ENCODE measurements at regions of chr12 and their contacts with region 1.

Region 1: DNA sequence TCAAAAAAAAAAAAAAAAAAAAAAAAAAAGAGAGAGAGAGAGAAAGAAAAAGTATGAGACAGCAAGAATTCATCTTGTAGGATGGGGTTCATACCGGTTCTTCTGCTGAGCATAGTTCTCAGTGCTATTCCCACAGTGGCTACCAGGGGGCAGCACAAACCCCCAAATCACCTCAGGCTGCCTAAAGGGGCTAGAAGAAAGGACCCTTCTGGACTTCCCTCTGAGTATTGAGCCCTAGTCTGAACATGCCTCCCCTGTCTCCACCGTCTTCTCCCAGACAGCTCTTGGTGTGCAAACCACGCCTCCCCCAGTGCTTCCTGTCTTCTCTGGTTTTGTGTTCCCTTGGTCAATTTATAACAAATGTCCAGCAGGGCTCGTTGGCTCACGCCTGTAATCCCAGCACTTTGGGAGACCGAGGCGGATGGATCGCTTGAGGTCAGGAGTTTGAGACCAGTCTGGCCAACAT is 31.3 kb upstream of the SMUG1 start:
- DNase-seq: peak; percentile 81
- H3K4me3 ChIP-seq: no peak overlapping the region
- H3K27ac ChIP-seq: no peak overlapping the region
- H3K4me1 ChIP-seq: peaks cover 45% of the 10 kb centered on the region
- CTCF ChIP-seq: peak; percentile 83

Region 2: DNA sequence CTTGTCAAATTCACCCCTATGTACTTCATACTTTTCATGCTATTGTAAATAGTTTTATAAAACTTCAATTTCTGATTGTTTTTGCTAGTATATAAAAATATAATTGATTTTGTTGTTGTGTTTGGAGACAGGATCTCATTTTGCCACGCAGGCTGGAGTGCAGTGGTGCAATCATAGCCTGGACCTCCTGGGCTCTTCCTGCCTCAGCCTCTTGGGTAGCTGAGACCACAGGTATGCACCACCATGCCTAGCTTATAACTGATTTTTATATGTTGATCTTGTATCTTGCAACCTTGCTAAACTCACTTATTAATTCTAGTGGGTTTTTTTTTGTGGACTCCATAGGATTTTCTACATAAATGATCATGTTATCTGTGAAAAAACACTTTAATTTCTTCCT is 567.8 kb before region 1 on chr12:
- CTCF ChIA-PET with region 1: interaction called, 12 read pairs
- POLR2A ChIA-PET with region 1: no interaction called
- intact Hi-C with region 1: no loop called
- DNase-seq: no peak
- H3K4me3 ChIP-seq: no peak overlapping the region
- H3K27ac ChIP-seq: no peak overlapping the region
- H3K4me1 ChIP-seq: no peaks in the 10 kb centered on the region
- CTCF ChIP-seq: no peak

Region 3: DNA sequence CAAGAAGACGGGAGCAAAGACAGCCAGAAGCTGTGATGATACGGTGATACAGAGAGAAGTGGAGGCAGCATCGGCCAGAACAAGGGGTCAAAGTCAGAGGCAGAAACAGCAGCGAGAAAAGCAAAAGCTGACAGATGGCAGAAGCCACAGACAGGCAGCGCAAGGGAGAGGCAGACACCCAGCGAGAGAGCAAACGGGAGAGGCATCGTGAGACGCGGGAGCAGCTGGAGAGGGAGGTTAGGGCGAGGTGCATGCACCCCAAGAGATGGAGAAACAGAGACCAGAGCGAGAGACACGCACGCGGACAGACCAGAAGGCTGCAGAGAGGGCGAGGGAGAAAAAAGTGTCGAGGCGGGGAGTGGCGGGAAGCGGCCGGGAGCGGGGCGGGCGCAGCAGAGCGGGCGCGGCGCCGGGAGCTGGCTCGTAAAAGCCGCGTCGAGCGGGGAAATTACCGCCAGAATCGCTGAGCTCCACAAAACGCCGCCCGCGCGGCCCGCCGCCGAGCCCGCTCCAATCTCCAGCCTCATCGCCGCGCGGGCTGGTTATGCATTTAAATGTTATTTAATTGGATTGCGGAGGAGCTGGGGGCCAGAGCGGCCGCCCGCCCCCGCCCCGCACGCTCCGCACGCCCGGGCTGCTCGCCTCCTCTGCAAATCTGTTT is 46.9 kb before region 1 on chr12:
- CTCF ChIA-PET with region 1: no interaction called
- POLR2A ChIA-PET with region 1: no interaction called
- intact Hi-C with region 1: no loop called
- DNase-seq: no peak
- H3K4me3 ChIP-seq: no peak overlapping the region
- H3K27ac ChIP-seq: no peak overlapping the region
- H3K4me1 ChIP-seq: peaks cover 3% of the 10 kb centered on the region
- CTCF ChIP-seq: no peak

Region 4: DNA sequence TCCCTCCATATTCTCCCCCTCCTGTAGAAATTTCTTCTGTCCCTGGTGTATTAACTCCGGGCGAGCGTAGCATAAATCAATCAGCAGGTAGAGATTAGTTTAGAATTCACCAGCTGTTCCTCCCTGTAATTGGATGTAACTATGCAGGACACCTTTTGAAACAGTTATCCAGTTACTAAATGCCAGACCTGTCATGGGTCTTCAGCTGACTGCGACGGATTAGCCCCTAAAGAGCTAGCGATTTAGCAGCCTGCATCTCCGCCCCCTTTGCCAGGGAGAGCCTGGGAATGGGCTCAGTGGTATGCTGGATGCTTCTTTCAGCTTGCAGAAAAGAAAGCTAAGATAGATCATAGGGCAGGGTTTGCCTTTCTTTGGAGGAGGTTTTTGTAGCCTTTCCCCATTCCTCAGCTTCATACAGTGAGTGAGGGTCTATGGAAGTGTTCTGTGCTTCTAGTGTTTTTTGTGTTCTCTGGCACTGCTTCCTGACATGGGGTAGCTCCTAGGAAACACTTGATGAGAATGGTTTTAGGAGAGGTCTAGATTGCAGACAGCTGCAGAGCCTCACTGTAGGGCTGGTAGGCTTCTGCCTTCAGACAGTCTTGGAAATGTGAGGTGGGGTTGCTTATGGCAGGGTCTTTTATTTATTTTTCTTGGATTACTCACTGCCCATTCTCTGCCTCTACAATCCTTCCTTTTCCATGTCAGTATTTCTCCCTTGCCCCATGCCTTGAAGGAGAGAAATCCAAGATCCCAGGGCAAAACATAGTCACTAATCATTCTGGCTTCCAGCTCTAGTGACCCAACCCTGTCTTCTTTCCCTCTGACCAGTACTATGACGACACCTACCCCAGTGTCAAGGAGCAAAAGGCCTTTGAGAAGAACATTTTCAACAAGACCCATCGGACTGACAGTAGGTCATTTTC is 121.5 kb after region 1 on chr12:
- CTCF ChIA-PET with region 1: no interaction called
- POLR2A ChIA-PET with region 1: no interaction called
- intact Hi-C with region 1: no loop called
- DNase-seq: no peak
- H3K4me3 ChIP-seq: no peak overlapping the region
- H3K27ac ChIP-seq: no peak overlapping the region
- H3K4me1 ChIP-seq: peaks cover 8% of the 10 kb centered on the region
- CTCF ChIP-seq: no peak

Region 5: DNA sequence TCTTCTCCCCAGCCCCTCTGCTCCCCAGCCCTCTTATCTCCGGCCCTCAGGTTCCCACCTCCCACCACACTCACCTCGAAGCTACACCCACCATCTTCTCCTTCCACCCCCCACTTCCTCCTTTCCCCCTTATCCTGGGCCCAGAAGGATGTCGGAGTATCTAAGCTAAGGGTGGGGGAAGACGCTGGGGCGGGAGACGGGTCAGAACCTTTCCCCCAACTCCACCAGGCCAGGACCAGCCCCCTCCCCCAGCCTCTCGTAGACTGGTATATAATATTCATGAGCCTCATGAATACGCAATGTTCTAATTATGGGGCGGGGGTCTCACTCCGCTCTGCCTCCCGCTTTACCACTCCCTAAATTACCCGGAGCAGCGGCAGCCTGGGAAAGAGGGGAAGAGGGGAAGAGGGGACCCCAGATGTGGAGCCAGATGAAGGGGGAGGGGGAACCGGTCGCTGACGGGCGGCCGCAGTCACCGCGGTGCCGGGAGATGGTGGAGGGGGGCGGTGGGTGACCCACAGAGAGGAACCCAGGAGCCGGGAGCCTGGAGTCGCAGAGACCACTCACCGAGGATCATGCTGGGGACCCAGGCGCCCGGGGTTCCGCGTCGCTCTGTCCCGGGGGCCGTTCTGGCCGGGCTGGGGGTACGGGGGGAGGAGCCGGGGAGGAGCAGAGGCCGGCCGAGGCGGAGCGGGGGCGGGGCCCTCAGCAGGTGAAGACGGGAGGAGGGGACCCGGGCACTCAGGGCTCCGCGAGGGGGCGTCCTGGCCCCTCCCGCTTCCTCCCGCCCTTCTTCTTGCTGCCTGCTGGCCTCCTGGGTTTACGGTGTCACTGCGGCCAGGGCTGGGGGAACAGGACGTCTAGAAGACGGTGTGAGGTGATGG is 170.8 kb after region 1 on chr12:
- CTCF ChIA-PET with region 1: no interaction called
- POLR2A ChIA-PET with region 1: no interaction called
- intact Hi-C with region 1: loop called (anchors 1 kb)
- DNase-seq: peak; percentile 84
- H3K4me3 ChIP-seq: peak overlapping the region; percentile 74
- H3K27ac ChIP-seq: no peak overlapping the region
- H3K4me1 ChIP-seq: peaks cover 42% of the 10 kb centered on the region
- CTCF ChIP-seq: peak; percentile 66